ENCODE measurements at regions of chr10 and their contacts with region 1.

Region 1: DNA sequence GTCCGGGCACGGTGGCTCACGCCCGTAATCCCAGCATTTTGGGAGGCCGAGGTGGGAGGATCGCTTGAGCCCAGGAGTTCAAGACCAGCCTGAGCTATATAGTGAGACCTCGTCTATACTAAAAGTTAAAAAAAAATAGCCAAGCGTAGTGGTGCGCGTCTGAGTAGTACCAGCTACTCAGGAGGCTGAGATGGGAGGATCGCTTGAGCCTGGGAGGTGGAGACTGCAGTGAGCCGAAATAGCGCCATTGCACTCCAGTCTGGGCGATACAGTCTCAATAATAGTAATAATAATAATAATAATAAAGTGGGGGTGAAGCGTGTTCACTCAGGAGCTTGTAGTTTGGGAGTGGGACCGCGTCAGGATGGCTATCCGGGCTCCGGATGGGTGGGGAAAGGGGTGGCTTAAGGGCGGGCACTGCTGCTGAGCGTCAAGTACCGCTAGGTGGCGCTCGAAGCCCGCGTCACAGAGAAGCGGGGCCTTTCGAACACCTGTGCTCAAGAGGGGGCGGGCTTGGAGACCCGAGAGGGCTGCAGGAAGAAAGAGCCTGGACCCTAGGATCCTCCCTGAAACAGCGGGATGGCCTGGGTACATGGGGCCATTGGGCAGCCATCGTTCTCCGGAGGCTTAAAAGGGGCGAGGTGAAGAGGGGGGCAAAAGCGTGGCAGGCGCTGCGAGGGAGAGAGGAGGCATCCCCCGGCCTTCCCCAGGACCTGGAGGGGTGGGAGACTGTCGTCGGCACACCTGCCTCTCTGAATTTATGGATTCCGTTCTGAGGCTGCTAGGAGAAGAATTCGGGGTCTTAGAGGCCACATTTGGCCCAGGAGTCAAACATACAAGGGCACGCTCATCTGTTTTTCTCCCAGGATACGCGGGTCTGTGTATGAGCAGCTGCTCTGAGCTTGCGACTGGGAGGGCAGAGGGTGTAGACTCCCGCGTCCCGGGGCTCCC is 14.5 kb downstream of the LBX1 start:
- DNase-seq: peak; percentile 43 to 65
- ATAC-seq: peak; percentile 66 to 93 (median 84)
- H3K4me3 ChIP-seq: peak overlapping the region in 1 of 10 donors; percentile 8
- H3K27ac ChIP-seq: no peak overlapping the region
- H3K4me1 ChIP-seq: peaks cover 14 to 47% (median 42%) of the 10 kb centered on the region in 9 donors
- H3K27me3 ChIP-seq: peaks cover 58 to 100% (median 100%) of the 10 kb centered on the region in 7 donors
- CTCF ChIP-seq: peak; percentile 68 to 94 (median 89)

Region 2: DNA sequence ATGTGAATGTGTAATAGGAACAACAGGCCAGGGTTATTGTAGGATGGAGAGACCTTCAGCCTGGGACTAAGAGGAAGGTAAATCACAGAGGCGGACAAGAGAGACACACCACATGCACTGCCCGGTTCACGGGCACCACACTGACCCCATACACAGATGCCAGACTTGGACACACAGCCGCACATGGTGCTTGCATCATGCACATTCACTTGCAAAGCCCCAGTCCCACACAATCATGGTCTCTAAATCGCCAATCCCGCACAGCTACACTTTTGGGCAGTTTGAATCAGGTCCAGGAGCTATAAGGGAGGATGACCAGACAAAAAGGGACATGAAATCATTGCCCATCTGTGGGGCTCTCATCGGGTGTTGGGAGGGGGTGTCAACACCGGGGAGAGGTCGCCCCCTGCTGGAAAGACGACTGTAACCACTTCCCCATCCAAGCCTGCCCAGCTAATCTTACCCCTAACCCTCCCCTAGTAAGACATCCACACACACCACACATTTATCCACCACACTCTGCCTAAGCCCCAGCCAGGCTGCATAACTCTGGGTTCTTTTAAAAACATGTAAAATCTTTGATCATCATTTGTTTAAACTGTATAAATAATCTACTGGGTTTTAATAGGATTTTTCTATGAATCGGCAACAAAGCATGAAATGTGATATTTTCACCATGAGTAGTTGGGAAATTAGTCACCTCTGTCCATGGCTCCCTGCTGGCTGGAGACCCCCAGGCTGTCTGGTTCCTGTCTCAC is 342.5 kb before region 1 on chr10:
- intact Hi-C with region 1: no loop called
- DNase-seq: no peak
- ATAC-seq: no peak
- H3K4me3 ChIP-seq: no peak overlapping the region
- H3K27ac ChIP-seq: no peak overlapping the region
- H3K4me1 ChIP-seq: no peaks in the 10 kb centered on the region
- H3K27me3 ChIP-seq: peaks cover 0 to 76% (median 61%) of the 10 kb centered on the region in 7 donors
- CTCF ChIP-seq: peak in 7 of 9 donors; percentile 8 to 61 (median 44)

Region 3: DNA sequence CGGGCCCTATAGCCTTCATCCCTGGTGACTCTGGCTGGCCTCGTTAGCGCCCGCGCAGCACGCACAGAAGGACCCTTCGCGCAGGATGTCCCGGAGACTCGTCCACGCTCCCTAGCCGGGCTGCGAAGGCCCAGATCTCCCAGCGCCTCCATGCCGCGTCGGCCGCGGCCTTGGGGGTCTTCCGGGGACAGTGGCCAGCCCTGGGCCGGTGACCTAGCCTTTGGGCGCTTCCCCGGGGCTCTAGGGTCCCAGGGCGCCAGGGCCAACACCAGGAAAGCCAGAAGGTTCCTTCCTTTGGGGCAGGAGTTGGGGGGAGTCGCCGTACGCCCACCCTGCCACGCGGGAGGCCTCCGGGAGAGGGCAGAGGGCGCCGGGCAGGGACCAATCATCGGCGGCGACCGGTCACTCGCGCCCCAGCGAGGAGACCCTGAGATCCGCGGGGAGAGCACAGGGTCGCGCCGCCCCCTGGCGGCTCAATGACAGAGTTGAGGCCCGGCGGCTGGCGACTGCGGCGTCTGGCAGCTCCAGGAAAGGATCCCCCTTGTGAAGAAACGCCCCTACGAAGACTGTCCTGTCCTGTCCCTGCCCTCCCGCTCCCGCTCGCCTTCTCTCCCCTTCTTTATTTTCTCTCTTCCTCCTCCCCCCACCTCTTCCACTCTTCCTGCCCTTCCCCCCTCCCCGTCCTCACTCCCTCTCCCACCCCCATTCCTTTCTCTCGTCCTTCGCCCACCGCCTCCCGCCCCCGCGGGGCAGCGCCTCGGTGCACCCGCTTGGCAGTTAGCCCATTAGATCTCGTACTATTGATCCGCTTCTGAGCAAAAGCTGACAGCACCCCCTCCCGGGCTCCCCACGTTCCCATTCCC is 76.8 kb after region 1 on chr10:
- intact Hi-C with region 1: loop called in 8 of 10 experiments (anchors 5 to 10 kb)
- DNase-seq: peak; percentile 59 to 69
- ATAC-seq: peak; percentile 76 to 84 (median 80)
- H3K4me3 ChIP-seq: peak overlapping the region; percentile 41 to 67 (median 62)
- H3K27ac ChIP-seq: peak overlapping the region in 6 of 10 donors; percentile 53 to 81 (median 68)
- H3K4me1 ChIP-seq: peaks cover 0 to 22% (median 12%) of the 10 kb centered on the region in 9 donors
- H3K27me3 ChIP-seq: peaks cover 5 to 97% (median 68%) of the 10 kb centered on the region in 7 donors
- CTCF ChIP-seq: peak; percentile 32 to 78 (median 68)

Region 4: DNA sequence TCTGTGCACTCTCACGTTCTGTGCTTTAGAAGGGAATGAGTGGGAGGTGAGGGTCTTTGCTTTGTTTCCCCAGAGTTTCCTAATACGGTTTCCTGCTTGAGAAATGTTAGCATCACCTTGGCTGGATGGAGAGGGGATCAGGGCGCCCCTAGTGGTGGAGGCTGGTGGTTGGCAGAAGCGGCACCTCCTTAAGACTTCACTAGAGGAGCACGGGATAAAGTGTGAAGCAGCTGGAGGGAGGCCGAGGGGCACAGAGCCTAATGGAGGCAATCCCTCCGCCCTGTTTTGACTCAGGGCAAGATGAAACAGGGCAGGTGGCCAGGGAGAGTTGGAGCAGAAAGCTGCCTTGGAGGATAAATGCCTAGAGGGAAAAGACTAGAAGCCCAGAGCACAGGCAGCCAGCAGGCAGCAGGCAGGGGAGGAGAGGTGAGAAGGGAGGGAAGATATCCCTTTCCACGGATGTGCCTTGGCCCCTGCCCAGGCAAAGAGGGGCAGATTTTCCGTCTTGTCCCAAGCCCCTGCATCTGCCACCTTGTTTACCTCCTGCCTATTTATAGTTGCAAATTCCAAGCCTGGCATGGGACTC is 83.3 kb after region 1 on chr10:
- intact Hi-C with region 1: loop called in 7 of 10 experiments (anchors 5 to 10 kb)
- DNase-seq: peak; percentile 43 to 47
- ATAC-seq: peak in 6 of 8 donors; percentile 15 to 55 (median 39)
- H3K4me3 ChIP-seq: no peak overlapping the region
- H3K27ac ChIP-seq: no peak overlapping the region
- H3K4me1 ChIP-seq: peaks cover 0 to 16% (median 3%) of the 10 kb centered on the region in 9 donors
- H3K27me3 ChIP-seq: peaks cover 0 to 52% (median 31%) of the 10 kb centered on the region in 7 donors
- CTCF ChIP-seq: peak; percentile 61 to 87 (median 82)

Region 5: GRCh38 chr10:101441541-101442455 is 227.1 kb after region 1 on chr10:
- intact Hi-C with region 1: loop called in 2 of 10 experiments (anchors 10 kb)
- DNase-seq: peak in 1 of 2 donors; percentile 17
- ATAC-seq: peak; percentile 82 to 93 (median 84)
- H3K4me3 ChIP-seq: no peak overlapping the region
- H3K27ac ChIP-seq: no peak overlapping the region
- H3K4me1 ChIP-seq: peaks cover 0 to 34% (median 16%) of the 10 kb centered on the region in 9 donors
- H3K27me3 ChIP-seq: no peaks in the 10 kb centered on the region
- CTCF ChIP-seq: peak in 8 of 9 donors; percentile 29 to 68 (median 62)

Region 6: GRCh38 chr10:101467286-101467770 is 252.6 kb after region 1 on chr10:
- intact Hi-C with region 1: loop called in 5 of 10 experiments (anchors 2 to 10 kb)
- DNase-seq: peak in 1 of 2 donors; percentile 46
- ATAC-seq: peak; percentile 69 to 87 (median 82)
- H3K4me3 ChIP-seq: no peak overlapping the region
- H3K27ac ChIP-seq: no peak overlapping the region
- H3K4me1 ChIP-seq: peaks cover 0 to 36% (median 20%) of the 10 kb centered on the region in 9 donors
- H3K27me3 ChIP-seq: no peaks in the 10 kb centered on the region
- CTCF ChIP-seq: peak; percentile 43 to 87 (median 73)

Region 7: GRCh38 chr10:101782811-101783735 is 568.4 kb after region 1 on chr10 and contains the start of gene NPM3:
- intact Hi-C with region 1: loop called in 5 of 10 experiments (anchors 2 to 10 kb)
- DNase-seq: peak; percentile 78 to 85
- ATAC-seq: peak; percentile 65 to 79 (median 74)
- H3K4me3 ChIP-seq: peak within 1 kb of the TSS; percentile 19 to 82 (median 71)
- H3K27ac ChIP-seq: peak within 1 kb of the TSS in 8 of 10 donors; percentile 35 to 75 (median 50)
- H3K4me1 ChIP-seq: peaks cover 11 to 66% (median 44%) of the 10 kb centered on the region in 9 donors
- H3K27me3 ChIP-seq: peaks cover 0 to 23% (median 9%) of the 10 kb centered on the region in 7 donors
- CTCF ChIP-seq: no peak
- total RNA-seq, gene NPM3: 4.9 to 12.1 (median 7.0) TPM

Measured in heart right ventricle (tissue), 16 donors.